ENCODE measurements at regions of chr2 and their contacts with region 1.

Region 1: DNA sequence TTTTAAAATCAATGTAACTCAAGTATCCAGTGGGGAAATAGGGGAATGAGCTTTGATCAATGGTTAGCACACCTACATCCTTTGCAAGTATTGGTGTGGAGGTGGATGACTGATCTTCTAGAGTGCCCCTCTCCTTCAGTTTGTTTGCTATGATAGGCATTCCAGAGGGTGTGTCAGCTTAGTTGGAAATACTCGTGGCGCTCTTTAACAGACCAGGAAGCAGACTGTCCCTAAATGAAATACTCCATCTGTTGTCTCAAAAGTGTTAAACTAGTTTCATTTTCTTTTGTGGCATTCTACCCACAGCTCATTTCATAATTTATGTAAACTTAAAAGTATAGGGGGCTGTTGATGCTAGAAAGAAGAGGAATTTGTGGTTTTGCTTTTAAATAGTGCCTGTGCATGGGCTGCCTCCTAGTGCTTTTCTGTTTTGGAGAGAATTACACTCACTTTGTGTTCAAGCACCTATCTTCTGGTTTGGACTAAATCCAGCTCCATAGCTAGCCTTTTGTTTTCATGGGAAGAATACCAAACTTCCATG is 66.2 kb downstream of the STAT1 start:
- DNase-seq: no peak
- H3K4me3 Mint-ChIP-seq: no peak overlapping the region
- H3K27ac Mint-ChIP-seq: no peak overlapping the region
- H3K4me1 Mint-ChIP-seq: peaks cover 19% of the 10 kb centered on the region
- H3K27me3 Mint-ChIP-seq: no peaks in the 10 kb centered on the region

Region 2: DNA sequence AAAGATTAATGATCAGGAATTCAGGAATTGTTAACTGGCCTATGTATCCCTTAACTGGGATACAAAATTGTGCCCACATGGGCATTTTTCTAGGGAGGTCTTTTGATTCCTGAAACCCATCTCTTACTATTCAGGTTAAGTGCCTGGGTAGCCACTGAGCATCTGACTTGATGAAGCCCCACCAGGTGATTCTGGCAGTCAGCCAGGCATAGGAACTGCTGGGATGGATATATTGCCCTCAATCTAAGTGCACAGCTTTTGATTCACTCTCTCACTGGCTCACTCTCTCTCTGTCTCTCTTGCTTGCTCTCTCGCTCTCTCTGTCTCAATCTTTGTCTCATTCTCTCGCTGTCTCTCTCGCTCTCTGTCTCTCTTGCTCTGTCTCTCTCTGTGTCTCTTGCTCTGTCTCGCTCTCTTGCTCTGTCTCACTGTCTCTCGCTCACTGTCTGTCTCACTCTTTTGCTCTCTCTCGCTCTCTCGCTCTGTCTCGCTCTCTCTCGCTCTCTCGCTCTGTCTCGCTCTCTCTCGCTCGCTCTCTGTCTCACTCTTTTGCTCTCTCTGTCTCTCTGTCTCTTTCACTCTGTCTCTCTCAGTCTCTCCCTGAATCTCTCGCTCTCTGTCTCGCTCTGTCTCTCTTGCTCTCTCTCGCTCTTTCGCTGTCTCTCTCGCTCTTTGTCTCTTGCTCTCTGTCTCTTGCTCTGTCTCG is 582.1 kb before region 1 on chr2:
- CTCF ChIA-PET with region 1: no interaction called
- POLR2A ChIA-PET with region 1: no interaction called
- intact Hi-C with region 1: no loop called
- DNase-seq: no peak
- H3K4me3 Mint-ChIP-seq: no peak overlapping the region
- H3K27ac Mint-ChIP-seq: no peak overlapping the region
- H3K4me1 Mint-ChIP-seq: peaks cover 5% of the 10 kb centered on the region
- H3K27me3 Mint-ChIP-seq: no peaks in the 10 kb centered on the region

Region 3: DNA sequence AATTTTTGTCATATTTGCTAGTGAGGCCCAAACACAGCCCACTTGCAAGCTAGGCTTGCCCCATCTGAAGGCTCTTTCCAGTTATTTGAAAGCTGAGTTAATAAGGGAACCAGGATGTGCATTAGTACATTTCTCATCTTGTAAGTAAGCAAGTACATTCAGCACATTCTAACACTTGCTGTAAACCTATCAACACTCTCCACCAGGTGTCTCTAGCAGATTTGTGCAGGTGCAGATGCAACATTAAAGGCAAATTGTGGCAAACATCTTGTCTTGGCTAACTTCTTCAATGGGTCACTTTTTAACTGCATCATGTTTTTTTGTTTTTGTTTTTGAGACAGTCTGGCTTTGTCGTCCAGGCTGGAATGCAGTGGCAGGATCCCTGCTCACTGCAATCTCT is 564.9 kb before region 1 on chr2:
- CTCF ChIA-PET with region 1: interaction called, 3 read pairs
- POLR2A ChIA-PET with region 1: no interaction called
- intact Hi-C with region 1: loop called (anchors 5 kb)
- DNase-seq: no peak
- H3K4me3 Mint-ChIP-seq: no peak overlapping the region
- H3K27ac Mint-ChIP-seq: no peak overlapping the region
- H3K4me1 Mint-ChIP-seq: peaks cover 4% of the 10 kb centered on the region
- H3K27me3 Mint-ChIP-seq: no peaks in the 10 kb centered on the region

Region 4: GRCh38 chr2:190717786-190718651 is 229.8 kb before region 1 on chr2:
- CTCF ChIA-PET with region 1: no interaction called
- POLR2A ChIA-PET with region 1: no interaction called
- intact Hi-C with region 1: no loop called
- DNase-seq: peak; percentile 63
- H3K4me3 Mint-ChIP-seq: peak overlapping the region; percentile 62
- H3K27ac Mint-ChIP-seq: peak overlapping the region; percentile 97
- H3K4me1 Mint-ChIP-seq: peaks cover 81% of the 10 kb centered on the region
- H3K27me3 Mint-ChIP-seq: no peaks in the 10 kb centered on the region

Region 5: GRCh38 chr2:190781604-190782198 is 166.1 kb before region 1 on chr2:
- CTCF ChIA-PET with region 1: interaction called, 9 read pairs
- POLR2A ChIA-PET with region 1: interaction called, 3 read pairs
- intact Hi-C with region 1: loop called (anchors 5 kb)
- DNase-seq: peak; percentile 66
- H3K4me3 Mint-ChIP-seq: no peak overlapping the region
- H3K27ac Mint-ChIP-seq: no peak overlapping the region
- H3K4me1 Mint-ChIP-seq: peaks cover 22% of the 10 kb centered on the region
- H3K27me3 Mint-ChIP-seq: peaks cover 9% of the 10 kb centered on the region

Measured in activated CD4-positive, alpha-beta memory T cell treated with anti-CD3 and anti-CD28 coated beads for 36 hours (primary cell).